H1 (cell line): ENCODE measurements at regions of chr1 and their contacts with region 1.

Region 1: DNA sequence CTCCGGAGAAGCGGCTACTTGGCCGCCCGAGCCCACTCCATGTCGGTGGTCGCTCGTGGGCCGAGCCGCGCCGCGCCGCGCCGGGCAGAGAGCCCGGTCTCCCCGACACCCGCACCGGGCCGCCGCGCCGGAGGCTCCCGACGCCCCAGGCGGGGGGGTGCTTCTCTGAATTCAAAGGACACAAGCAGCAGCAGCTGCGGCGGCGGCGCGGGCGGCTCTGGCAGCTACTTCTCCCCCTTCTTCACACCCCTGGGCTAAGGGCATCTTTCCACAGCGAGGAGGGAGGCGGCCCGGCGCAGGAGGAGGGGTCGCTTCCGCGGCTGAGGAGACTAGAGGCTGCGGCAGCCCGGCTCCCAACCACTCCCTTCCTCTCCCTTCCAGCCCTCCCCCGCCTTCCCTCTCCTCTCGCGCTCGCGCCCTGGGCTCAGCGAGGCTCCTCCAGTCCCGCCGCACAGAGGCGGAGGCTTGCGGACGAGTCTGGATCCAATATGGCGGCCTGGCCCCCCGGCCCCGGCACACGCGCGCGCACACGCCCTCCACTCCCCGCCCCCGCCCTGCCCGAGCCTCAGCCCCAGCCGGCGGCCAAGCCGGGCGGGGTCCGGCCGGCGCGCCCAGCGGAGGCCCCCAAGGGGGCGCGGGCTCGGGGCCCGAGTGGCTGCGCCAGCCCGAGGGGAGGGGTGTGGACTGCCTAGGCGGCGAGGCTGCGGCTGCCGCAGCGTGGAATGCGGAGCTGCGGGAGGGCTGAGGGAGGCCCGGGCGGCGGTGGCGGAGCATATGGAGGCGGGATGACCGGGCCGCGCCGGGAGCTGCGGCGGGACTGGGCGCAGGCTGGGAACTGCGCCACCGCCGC is at the start of gene CDC42BPA:
- DNase-seq: peak; percentile 19 to 80
- H3K4me3 ChIP-seq: peak within 1 kb of the TSS; percentile 59 to 91 (median 84)
- H3K27ac ChIP-seq: peak within 1 kb of the TSS; percentile 85
- H3K4me1 ChIP-seq: peaks cover 0 to 7% (median 1%) of the 10 kb centered on the region in 4 experiments; a peak in 4 of 7 replicates
- H3K27me3 ChIP-seq: no peaks in the 10 kb centered on the region
- CTCF ChIP-seq: no peak
- EP300 ChIP-seq: no peak
- POLR2A ChIP-seq: peak; percentile 6 to 68; a peak in 2 of 3 replicates
- RAD21 ChIP-seq: no peak
- total RNA-seq, gene CDC42BPA: 26.7 and 28.5 TPM in 2 replicates

Region 2: DNA sequence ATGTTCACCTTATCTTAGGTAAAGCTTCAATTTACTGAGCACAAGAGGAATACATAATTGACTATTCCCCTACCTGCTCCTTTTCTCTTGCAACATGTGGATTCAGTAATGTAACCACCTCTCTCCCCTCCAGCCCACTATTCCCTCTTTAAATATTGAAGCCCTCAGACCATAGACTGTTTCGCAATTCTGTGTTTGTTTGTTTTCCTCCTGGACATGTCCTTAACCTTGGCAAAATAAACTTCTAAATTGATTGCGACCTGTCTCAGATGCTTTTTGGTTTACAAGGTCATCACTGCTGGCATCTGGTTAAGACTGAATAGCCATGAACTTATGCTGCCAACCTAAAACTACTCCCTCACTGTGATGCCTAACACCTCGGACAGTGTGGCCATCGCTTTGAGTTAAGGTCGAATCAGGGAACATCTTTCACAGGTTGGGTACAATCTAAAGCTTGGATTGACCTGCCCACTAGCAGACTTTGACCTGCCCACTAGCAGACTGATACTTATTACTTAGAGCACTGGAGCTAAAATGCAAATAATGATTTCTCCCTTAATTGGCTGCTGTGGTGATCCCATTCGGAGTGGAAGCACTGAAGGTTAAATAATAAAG is 10.3 kb after region 1 on chr1:
- CTCF ChIA-PET with region 1: no interaction called
- POLR2A ChIA-PET with region 1: interaction called, 15 read pairs
- DNase-seq: no peak
- H3K4me3 ChIP-seq: no peak overlapping the region
- H3K27ac ChIP-seq: no peak overlapping the region
- H3K4me1 ChIP-seq: peaks cover 0 to 5% (median 2%) of the 10 kb centered on the region in 4 experiments; a peak in 3 of 7 replicates
- H3K27me3 ChIP-seq: no peaks in the 10 kb centered on the region
- CTCF ChIP-seq: no peak
- EP300 ChIP-seq: no peak
- POLR2A ChIP-seq: no peak
- RAD21 ChIP-seq: no peak

Region 3: DNA sequence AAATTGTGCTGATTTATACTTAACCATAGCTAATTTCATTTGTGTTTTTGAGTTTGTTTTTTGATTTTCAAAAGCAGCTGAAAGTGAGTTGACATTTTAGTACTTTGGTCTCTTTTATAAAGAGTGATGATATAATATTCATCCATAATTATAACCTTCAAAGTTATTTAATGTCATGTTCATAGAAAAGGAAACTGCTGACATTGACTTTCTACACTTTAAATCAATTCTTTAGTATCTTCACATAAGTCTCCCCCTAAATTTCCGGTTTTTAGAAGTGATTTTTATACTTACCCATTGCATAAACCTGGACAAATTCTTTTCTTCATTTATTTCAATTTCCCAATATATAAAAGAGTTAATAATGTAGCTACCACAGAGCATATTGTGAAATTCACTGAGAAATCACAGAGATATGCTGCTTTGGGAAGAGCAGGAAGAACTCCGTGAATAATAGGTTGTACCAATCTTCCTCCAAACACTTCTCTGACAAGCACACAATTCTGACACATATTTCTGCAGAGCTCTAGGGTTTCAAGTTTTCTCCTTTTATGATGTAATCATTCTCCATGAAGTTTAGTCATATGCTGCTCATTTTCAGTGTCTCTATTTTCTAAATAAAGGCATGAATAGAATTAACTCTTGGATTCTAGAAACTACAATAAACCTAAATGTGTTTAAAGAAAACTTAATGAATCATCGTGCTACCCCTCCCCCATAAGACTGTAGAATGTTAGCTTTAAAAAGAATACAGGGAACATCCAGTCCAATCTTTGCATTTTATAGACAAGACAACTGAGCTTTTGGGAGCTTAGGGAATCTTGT is 25.7 kb after region 1 on chr1:
- CTCF ChIA-PET with region 1: interaction called, 4 read pairs
- POLR2A ChIA-PET with region 1: interaction called, 11 read pairs
- DNase-seq: no peak
- H3K4me3 ChIP-seq: no peak overlapping the region
- H3K27ac ChIP-seq: no peak overlapping the region
- H3K4me1 ChIP-seq: no peaks in the 10 kb centered on the region
- H3K27me3 ChIP-seq: no peaks in the 10 kb centered on the region
- CTCF ChIP-seq: no peak
- EP300 ChIP-seq: no peak
- POLR2A ChIP-seq: no peak
- RAD21 ChIP-seq: no peak

Region 4: DNA sequence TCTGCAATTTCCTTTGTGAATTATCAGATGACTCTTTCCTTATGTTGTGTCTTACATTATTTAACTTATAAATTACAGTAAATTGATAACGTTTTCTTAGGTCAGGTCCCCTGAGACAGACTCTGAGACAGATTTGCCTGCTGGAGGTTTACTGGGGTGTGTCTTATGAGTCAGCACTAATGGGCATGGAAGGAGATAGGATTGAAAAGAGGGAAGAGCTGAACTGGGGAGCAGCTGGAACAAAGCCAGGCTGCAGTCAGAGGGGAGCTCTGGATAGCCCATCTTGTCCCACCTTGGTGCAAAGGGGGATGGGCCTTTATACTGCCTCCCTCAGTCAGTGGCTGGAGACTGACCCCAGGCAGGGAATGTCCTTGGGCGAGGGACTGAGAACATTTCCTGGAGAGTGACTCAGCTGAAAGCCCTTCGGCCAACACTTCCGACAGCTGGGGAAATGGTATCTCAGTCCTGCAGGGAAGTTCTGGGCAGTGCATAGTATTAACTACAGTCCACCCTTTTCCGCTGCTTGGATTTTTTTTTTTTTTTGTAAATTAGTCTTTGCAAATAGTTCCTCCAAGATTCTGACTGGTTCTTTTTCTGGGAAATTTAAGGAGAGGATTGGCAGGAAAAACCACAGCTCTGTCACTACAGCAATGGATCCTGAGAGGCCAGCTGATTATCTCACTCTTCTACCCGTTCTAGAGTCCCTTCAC is 39.1 kb after region 1 on chr1:
- CTCF ChIA-PET with region 1: no interaction called
- POLR2A ChIA-PET with region 1: interaction called, 24 read pairs
- DNase-seq: peak; percentile 51 to 53
- H3K4me3 ChIP-seq: no peak overlapping the region; a peak in 1 of 8 replicates
- H3K27ac ChIP-seq: peak overlapping the region; percentile 5; the same call in 1 of the 2 replicates
- H3K4me1 ChIP-seq: peaks cover 7 to 13% (median 9%) of the 10 kb centered on the region in 4 experiments; a peak in 6 of 7 replicates
- H3K27me3 ChIP-seq: no peaks in the 10 kb centered on the region; a peak in 1 of 7 replicates
- CTCF ChIP-seq: no peak
- EP300 ChIP-seq: no peak
- POLR2A ChIP-seq: no peak
- RAD21 ChIP-seq: no peak

Region 5: GRCh38 chr1:227378871-227379554 is 60.8 kb after region 1 on chr1:
- CTCF ChIA-PET with region 1: no interaction called
- POLR2A ChIA-PET with region 1: no interaction called
- DNase-seq: no peak
- H3K4me3 ChIP-seq: no peak overlapping the region
- H3K27ac ChIP-seq: no peak overlapping the region
- H3K4me1 ChIP-seq: peaks cover 0 to 5% (median 2%) of the 10 kb centered on the region in 4 experiments; a peak in 3 of 7 replicates
- H3K27me3 ChIP-seq: no peaks in the 10 kb centered on the region
- CTCF ChIP-seq: no peak
- EP300 ChIP-seq: no peak
- POLR2A ChIP-seq: no peak
- RAD21 ChIP-seq: no peak